ENCODE measurements at regions of chr14 and their contacts with region 1.

Region 1: GRCh38 chr14:74249433-74250375 is 10.5 kb downstream of the VSX2 start:
- DNase-seq: no peak
- H3K4me3 ChIP-seq: no peak overlapping the region
- H3K27me3 ChIP-seq: peaks cover 26% of the 10 kb centered on the region
- CTCF ChIP-seq: no peak

Region 2: DNA sequence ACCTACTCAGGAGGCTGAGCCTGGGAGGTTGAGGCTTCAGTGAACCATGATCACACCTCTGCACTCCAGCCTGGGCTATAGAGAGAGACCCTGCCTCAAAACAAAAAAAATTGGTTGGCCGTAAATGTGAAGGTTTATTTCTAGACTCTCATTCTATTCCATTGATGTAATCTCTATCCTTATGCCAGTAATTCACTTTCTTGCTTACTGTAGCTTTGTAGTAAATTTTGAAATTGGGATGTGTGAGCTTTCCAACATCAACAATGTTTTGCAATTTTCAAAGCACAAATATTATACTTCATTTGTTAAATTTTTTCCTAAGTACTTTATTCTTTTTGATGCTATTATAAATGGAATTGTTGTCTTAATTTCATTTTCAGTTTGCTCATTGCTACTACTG is 140.3 kb before region 1 on chr14:
- CTCF ChIA-PET with region 1: interaction called, 23 read pairs
- POLR2A ChIA-PET with region 1: no interaction called
- DNase-seq: no peak
- H3K4me3 ChIP-seq: no peak overlapping the region
- H3K27me3 ChIP-seq: no peaks in the 10 kb centered on the region
- CTCF ChIP-seq: no peak

Region 3: GRCh38 chr14:74160763-74161162 is 88.9 kb before region 1 on chr14:
- CTCF ChIA-PET with region 1: no interaction called
- POLR2A ChIA-PET with region 1: no interaction called
- DNase-seq: no peak
- H3K4me3 ChIP-seq: no peak overlapping the region
- H3K27me3 ChIP-seq: no peaks in the 10 kb centered on the region
- CTCF ChIP-seq: no peak

Region 4: DNA sequence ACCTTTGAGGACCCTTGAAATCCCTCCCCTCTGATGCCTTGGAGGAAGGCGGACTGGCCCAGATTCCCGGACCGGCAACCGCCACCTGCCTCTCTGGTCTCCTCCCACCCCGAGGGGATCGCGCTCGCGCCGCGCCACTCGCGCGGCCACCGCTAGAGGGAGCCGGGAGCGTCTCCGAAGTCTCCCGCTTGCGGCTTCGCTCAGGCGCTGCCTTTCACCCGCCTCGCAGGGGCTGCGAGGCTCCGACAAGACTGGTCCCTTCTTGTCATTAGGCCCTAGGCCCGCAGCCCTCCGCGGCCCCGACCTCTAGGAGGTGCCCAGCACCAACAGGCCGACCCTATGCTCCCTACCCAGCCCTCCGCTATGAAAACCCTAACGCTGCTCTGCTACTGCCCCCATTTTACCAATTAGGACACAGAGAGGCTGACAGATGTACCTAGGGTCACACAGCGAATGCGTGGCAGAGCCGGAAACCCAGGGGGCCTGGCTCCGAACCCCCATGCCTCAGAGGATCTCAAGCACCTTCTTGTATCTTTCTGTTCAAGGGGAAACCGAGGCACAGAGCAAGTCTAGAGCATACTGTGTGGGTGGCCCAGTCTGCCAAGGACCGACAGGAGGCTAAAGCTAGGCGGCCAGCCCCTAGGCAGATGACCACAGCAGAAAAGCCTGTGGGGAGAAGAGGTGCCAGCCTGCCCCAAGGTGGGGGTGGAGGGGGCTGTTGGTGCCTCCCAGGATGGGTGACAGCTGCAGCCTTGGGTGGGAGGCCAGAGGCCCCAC is 31.8 kb before region 1 on chr14:
- CTCF ChIA-PET with region 1: interaction called, 13 read pairs
- POLR2A ChIA-PET with region 1: no interaction called
- DNase-seq: no peak
- H3K4me3 ChIP-seq: peak overlapping the region; percentile 18; the same call in 1 of the 2 replicates
- H3K27me3 ChIP-seq: peaks cover 29% of the 10 kb centered on the region
- CTCF ChIP-seq: peak; percentile 100

Region 5: GRCh38 chr14:74296037-74296467 is 46.3 kb after region 1 on chr14:
- CTCF ChIA-PET with region 1: no interaction called
- POLR2A ChIA-PET with region 1: no interaction called
- DNase-seq: no peak
- H3K4me3 ChIP-seq: no peak overlapping the region
- H3K27me3 ChIP-seq: no peaks in the 10 kb centered on the region
- CTCF ChIP-seq: no peak

Region 6: DNA sequence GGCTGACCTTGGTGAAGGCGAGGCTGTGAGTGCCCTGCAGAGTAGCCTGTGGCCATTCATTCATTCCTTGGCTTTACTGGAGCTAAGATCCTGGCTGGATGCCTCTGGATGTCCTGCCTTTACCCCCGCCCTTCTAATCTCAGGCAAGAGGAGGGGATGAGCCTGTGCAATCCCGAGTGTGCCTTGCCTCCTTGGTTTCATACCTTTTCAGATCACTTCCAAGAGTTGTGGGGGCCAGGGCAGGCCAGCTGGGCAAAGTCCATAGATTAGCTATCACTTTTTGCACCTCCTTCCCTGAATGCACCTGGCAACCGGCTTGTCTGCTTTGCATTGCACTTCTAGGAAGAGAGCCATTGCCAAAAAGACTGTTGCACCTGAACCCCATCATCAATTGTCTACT is 100.1 kb after region 1 on chr14:
- CTCF ChIA-PET with region 1: no interaction called
- POLR2A ChIA-PET with region 1: no interaction called
- DNase-seq: no peak
- H3K4me3 ChIP-seq: no peak overlapping the region
- H3K27me3 ChIP-seq: peaks cover 32% of the 10 kb centered on the region
- CTCF ChIP-seq: no peak

Measured in BJ (cell line).